ENCODE measurements at regions of chr15 and their contacts with region 1.

Region 1: GRCh38 chr15:90387537-90388461 is at the start of gene IQGAP1:
- DNase-seq: peak; percentile 98 to 99 (median 98)
- ATAC-seq: peak; percentile 98 to 99 (median 98)
- H3K4me3 ChIP-seq: peak within 1 kb of the TSS; percentile 76 to 100 (median 94)
- H3K27ac ChIP-seq: peak within 1 kb of the TSS; percentile 94 to 100 (median 98)
- H3K4me1 ChIP-seq: peaks cover 4 to 45% (median 35%) of the 10 kb centered on the region in 12 donors
- H3K27me3 ChIP-seq: no peaks in the 10 kb centered on the region
- CTCF ChIP-seq: no peak
- POLR2A ChIP-seq: peak in 1 of 2 donors; percentile 90
- total RNA-seq, gene IQGAP1: 28.6 to 115 (median 36.8) TPM

Region 2: DNA sequence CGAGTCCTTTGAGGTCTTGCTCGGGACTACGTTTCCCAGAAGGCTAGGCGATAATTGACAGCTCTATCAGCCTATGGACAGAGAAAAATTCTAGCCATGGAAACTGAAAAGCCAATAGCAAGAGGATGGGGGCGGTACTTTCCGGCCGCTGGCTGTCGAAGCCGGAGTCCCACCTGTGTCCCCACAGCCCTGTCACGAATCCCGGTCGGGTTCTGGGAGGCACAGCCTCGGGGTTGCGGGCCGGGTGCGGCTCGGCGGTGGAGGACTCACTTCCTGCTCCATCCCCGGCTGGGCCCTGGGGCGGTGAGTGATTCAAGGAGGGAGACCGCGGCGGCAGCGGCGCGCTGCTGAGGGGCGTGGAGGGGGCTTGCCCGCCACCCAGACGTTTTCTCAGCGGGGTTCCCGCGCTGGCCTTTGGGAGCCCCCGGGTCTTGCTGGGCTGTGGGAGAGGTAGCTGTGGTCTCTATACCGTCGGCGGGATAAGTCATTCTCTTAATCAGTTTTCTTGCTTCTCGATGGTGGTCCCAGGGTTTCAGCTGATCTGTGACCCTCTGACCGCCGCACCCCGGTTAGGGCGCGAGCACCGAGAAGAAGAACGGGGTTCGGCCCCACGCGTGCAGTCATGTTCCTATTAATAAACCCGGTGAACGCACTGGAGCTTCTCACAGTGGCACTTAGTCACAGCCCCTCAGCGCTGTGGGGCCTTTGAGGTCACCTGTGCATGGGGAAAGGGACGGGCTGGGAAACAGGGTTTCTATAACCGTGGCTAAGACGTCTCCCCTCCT is 35.5 kb before region 1 on chr15 and contains the start of gene ZNF774:
- intact Hi-C with region 1: loop called in 1 of 10 experiments (anchors 1 kb)
- DNase-seq: peak; percentile 93 to 94 (median 93)
- ATAC-seq: peak; percentile 98 to 100 (median 99)
- H3K4me3 ChIP-seq: peak within 1 kb of the TSS; percentile 48 to 99 (median 88)
- H3K27ac ChIP-seq: peak within 1 kb of the TSS in 11 of 12 donors; percentile 61 to 92 (median 80)
- H3K4me1 ChIP-seq: peaks cover 0 to 17% (median 5%) of the 10 kb centered on the region in 12 donors
- H3K27me3 ChIP-seq: no peaks in the 10 kb centered on the region
- CTCF ChIP-seq: no peak
- POLR2A ChIP-seq: peak; percentile 20 to 82
- total RNA-seq, gene ZNF774: 2.1 to 9.9 (median 5.9) TPM

Region 3: GRCh38 chr15:90400406-90401314 is 12.9 kb after region 1 on chr15:
- intact Hi-C with region 1: loop called in 1 of 10 experiments (anchors 2 kb)
- DNase-seq: peak; percentile 63 to 79 (median 73)
- ATAC-seq: peak; percentile 96 to 98 (median 98)
- H3K4me3 ChIP-seq: peak overlapping the region in 10 of 12 donors; percentile 1 to 42 (median 14)
- H3K27ac ChIP-seq: peak overlapping the region; percentile 70 to 94 (median 84)
- H3K4me1 ChIP-seq: peaks cover 7 to 99% (median 60%) of the 10 kb centered on the region in 12 donors
- H3K27me3 ChIP-seq: no peaks in the 10 kb centered on the region
- CTCF ChIP-seq: no peak
- POLR2A ChIP-seq: peak in 1 of 2 donors; percentile 17

Region 4: DNA sequence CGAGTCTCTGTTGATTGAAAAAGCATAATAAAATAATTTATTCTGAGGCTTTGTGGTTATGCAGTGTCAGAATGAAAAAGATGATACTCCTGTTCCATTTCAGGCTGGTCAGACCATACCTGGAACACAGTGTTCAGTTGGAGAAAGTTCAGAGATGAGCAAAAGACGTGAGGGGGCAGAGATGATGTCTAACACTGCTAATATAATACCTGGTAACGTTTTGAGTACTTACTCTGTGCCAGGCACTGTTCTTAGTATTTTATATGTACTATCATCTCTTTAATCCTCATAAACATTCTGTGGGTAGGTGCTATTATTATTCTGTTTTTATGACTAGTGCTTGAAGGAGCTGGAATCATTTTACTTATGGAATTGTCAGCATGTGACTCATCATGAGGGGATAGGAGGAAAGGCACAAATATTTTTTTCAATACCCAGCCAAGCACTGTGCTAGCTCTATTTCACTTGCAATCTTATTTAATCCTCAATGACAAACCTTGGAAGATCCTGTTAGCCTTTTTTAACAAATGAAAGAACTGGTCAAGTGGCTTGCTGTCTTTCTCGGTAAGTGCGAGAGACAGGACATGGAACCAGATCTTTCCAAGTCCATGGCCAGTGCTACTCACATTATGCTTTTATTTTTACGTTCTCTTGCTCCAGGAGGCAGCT is 32.1 kb after region 1 on chr15:
- intact Hi-C with region 1: loop called in 6 of 10 experiments (anchors 5 kb)
- DNase-seq: no peak
- ATAC-seq: peak; percentile 37 to 69 (median 56)
- H3K4me3 ChIP-seq: peak overlapping the region in 1 of 12 donors; percentile 12
- H3K27ac ChIP-seq: peak overlapping the region in 10 of 12 donors; percentile 12 to 79 (median 33)
- H3K4me1 ChIP-seq: peaks cover 18 to 86% (median 71%) of the 10 kb centered on the region in 12 donors
- H3K27me3 ChIP-seq: no peaks in the 10 kb centered on the region
- CTCF ChIP-seq: no peak
- POLR2A ChIP-seq: no peak

Region 5: DNA sequence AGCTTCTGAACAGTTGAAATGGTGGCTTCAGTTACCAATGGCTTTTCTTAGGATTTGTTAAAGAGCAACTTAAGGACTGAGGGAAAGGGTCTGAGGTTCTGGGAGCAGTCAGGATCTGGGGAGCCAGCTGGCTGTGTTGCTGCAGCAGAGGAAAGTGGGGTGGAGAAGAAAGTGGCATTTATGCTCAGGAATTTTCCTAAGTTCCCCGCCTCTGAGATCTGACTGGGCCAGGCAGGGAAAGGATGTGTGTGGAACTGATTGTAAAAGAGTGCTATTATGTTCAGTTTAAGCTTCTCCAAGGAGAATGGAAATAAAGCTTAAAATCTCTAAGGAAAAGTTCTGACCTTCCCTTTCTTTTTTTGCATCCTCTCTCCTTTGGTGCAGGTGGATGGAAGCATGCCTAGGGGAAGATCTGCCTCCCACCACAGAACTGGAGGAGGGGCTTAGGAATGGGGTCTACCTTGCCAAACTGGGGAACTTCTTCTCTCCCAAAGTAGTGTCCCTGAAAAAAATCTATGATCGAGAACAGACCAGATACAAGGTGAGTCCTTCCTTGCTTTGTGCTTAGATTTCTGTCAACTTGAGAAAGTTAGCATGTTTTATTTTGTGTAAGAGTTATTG is 38.0 kb after region 1 on chr15:
- intact Hi-C with region 1: loop called in 6 of 10 experiments (anchors 5 kb)
- DNase-seq: no peak
- ATAC-seq: peak in 1 of 4 donors; percentile 32
- H3K4me3 ChIP-seq: no peak overlapping the region
- H3K27ac ChIP-seq: peak overlapping the region in 1 of 12 donors; percentile 27
- H3K4me1 ChIP-seq: peaks cover 10 to 56% (median 47%) of the 10 kb centered on the region in 12 donors
- H3K27me3 ChIP-seq: no peaks in the 10 kb centered on the region
- CTCF ChIP-seq: no peak
- POLR2A ChIP-seq: no peak

Region 6: GRCh38 chr15:90463381-90463780 is 75.6 kb after region 1 on chr15:
- intact Hi-C with region 1: loop called in 3 of 10 experiments (anchors 1 to 5 kb)
- DNase-seq: peak in 2 of 5 donors; percentile 43 to 54
- ATAC-seq: peak; percentile 88 to 95 (median 90)
- H3K4me3 ChIP-seq: peak overlapping the region in 1 of 12 donors; percentile 17
- H3K27ac ChIP-seq: peak overlapping the region; percentile 60 to 94 (median 84)
- H3K4me1 ChIP-seq: peaks cover 0 to 70% (median 58%) of the 10 kb centered on the region in 12 donors
- H3K27me3 ChIP-seq: no peaks in the 10 kb centered on the region
- CTCF ChIP-seq: peak in 7 of 12 donors; percentile 8 to 38 (median 24)
- POLR2A ChIP-seq: no peak